Esophagus muscularis mucosa (tissue), 4 donors: ENCODE measurements at regions of chr12 and their contacts with region 1.

Region 1: GRCh38 chr12:39587225-39587624 is 32.4 kb downstream of the ABCD2 start:
- DNase-seq: no peak
- H3K4me3 ChIP-seq: no peak overlapping the region
- H3K27ac ChIP-seq: no peak overlapping the region
- H3K4me1 ChIP-seq: no peaks in the 10 kb centered on the region
- H3K27me3 ChIP-seq: no peaks in the 10 kb centered on the region
- CTCF ChIP-seq: peak in 2 of 3 experiments; percentile 22 to 38
- EP300 ChIP-seq: no peak
- POLR2A ChIP-seq: no peak

Region 2: GRCh38 chr12:39682689-39683477 is 95.7 kb after region 1 on chr12:
- intact Hi-C with region 1: loop called (anchors 10 kb)
- DNase-seq: no peak
- H3K4me3 ChIP-seq: no peak overlapping the region
- H3K27ac ChIP-seq: no peak overlapping the region
- H3K4me1 ChIP-seq: no peaks in the 10 kb centered on the region
- H3K27me3 ChIP-seq: no peaks in the 10 kb centered on the region
- CTCF ChIP-seq: no peak
- EP300 ChIP-seq: no peak
- POLR2A ChIP-seq: no peak

Region 3: GRCh38 chr12:39831587-39832308 is 244.5 kb after region 1 on chr12:
- intact Hi-C with region 1: no loop called
- DNase-seq: no peak
- H3K4me3 ChIP-seq: no peak overlapping the region
- H3K27ac ChIP-seq: no peak overlapping the region
- H3K4me1 ChIP-seq: peaks cover 0 to 2% (median 0%) of the 10 kb centered on the region in 4 donors
- H3K27me3 ChIP-seq: no peaks in the 10 kb centered on the region
- CTCF ChIP-seq: no peak
- EP300 ChIP-seq: no peak
- POLR2A ChIP-seq: no peak